Astrocyte of the cerebellum (primary cell): ENCODE measurements at regions of chr17 and their contacts with region 1.

Region 1: DNA sequence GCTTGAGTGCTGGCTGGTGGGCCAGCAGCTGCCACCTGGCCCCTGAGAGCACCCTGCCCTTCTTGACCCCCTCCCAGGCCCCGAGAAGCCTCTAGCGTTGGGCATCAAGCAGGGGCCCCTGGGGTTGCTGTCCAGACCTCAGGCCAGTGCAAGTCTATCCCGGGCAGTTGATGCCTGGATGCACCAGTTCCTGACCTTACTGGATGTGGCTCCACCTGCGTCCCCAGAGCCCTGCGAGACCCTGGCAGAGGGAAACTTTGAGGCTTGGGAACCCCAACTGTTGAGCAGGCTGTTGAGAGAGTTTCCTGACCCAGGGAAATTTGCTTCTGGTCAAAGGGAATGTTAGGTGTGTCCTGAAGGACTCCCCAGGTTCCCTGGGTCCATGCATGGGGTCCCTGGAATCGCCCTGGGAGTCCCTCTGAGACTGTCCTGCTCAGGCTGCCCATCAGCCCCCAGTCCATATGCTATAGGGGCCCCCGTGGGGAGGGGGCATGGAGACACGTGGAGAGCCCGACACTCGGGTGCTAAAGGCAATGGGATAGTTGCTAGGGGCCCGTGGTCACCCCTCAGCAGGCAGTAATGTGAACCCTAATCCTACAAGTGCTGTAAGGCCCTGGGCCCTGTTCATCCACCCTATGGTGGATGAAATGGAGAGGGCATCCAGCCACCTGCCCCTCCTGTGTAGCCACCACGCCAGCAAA is 46.4 kb downstream of the RAB11FIP4 start:
- DNase-seq: no peak
- H3K4me3 ChIP-seq: no peak overlapping the region
- CTCF ChIP-seq: no peak

Region 2: GRCh38 chr17:31357831-31358394 is 80.0 kb before region 1 on chr17:
- in situ Hi-C with region 1: no loop called
- DNase-seq: no peak
- H3K4me3 ChIP-seq: no peak overlapping the region
- CTCF ChIP-seq: no peak

Region 3: GRCh38 chr17:31524926-31525800 is 87.3 kb after region 1 on chr17:
- in situ Hi-C with region 1: loop called (anchors 5 kb)
- DNase-seq: peak; percentile 91
- H3K4me3 ChIP-seq: no peak overlapping the region
- CTCF ChIP-seq: peak; percentile 91